ENCODE measurements at regions of chr1 and their contacts with region 1.

Region 1: DNA sequence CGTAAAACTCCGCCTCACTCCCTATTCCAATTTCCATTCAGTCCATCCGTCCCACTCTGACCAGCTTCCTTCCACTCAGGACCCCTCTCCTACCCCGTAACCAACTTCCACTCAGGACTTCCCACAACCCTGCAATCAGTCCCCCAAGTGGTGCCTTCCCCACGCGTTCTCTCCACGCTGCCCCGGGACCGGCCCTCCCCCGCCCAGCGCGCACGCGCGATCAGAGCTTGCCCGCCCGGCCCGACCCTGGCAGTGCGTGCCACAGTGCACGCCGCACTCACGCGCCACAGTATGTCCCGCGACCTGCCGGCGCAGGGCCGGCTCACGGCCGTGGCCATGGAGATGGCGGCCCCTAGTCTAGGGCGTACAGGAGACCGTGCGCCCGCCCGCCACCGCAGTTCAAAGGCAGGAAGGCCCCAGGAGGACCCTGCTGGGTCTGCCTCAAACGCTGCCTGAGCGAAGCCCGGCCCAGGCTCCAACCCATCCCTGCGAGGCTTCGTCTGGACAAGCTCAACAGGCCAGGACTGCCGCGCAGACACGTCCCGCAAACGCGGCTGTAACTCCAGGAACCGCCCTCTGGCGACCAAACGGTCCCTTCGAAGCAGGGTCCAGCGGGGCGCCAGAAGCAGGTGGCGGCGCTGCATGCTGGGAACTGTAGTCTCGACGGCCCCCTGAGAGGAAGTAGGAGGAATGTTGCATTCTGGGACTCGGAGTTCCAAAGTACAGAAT is at the start of gene NDC1:
- DNase-seq: peak; percentile 91
- ATAC-seq: peak; percentile 92
- H3K4me3 ChIP-seq: peak within 1 kb of the TSS; percentile 88
- H3K27ac ChIP-seq: peak within 1 kb of the TSS; percentile 99
- H3K4me1 ChIP-seq: peaks cover 7% of the 10 kb centered on the region; the same call in 1 of the 2 replicates
- H3K27me3 ChIP-seq: no peaks in the 10 kb centered on the region
- CTCF ChIP-seq: peak; percentile 10 to 20 (median 14); a peak in 1 of 6 replicates
- EP300 ChIP-seq: peak; percentile 6 to 38; a peak in 1 of 4 replicates
- POLR2A ChIP-seq: peak; percentile 94
- RAD21 ChIP-seq: no peak
- polyA plus RNA-seq, gene NDC1: 20.2 to 24.9 TPM

Region 2: DNA sequence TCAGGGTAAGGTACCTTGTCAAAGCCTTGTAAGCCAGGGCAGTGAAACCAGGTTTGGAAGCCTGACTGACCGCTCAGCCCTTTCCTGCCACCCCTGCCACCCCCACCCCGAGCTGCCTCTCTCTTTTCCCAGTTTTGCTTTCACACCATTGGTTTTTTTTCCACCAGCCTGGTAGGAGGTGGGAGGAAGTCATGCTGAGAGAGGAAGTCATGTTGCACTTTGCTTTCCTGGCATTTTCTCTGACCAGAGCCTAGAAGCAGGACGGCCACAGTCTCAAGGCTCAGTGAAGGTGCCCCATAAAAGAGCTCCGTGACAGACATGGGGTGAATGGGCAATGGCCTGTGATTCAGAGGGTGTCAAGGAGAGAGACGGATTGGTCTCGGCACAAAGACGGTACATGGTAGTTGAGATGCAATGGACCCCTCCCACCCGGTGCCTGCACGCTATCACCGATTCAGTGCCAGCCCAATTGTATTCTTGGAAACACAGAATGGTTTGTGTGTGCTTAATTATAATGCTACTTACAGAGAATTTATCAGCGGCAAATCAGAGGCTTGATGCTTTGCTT is 421.0 kb before region 1 on chr1:
- CTCF ChIA-PET with region 1: no interaction called
- POLR2A ChIA-PET with region 1: no interaction called
- RAD21 ChIA-PET with region 1: no interaction called
- SMC1A ChIA-PET with region 1: no interaction called
- in situ Hi-C with region 1: no loop called
- intact Hi-C with region 1: no loop called
- DNase-seq: no peak
- ATAC-seq: no peak
- H3K4me3 ChIP-seq: no peak overlapping the region
- H3K27ac ChIP-seq: no peak overlapping the region
- H3K4me1 ChIP-seq: peaks cover 16% of the 10 kb centered on the region
- H3K27me3 ChIP-seq: peaks cover 0 to 6% of the 10 kb centered on the region in 2 experiments; a peak in 2 of 4 replicates
- CTCF ChIP-seq: no peak
- EP300 ChIP-seq: no peak
- POLR2A ChIP-seq: no peak
- RAD21 ChIP-seq: no peak

Region 3: DNA sequence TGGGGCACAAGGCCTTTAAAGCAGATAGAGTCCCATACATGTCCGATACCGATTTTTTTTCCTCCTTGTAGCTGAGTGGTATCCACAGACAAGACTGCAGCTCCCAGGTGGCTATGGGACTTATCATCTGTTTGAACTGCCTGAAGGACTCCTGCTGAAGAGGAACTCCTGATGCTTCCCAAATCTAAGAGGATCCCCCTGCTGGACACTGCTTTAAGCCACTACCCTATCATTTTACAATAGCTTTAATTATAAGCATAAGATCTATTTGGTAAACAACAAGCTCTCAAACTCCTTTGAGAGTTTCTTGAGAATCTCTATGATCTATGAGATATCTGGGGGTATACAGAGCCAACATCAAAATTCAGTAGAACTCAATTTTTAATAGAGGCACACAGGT is 11.7 kb before region 1 on chr1:
- CTCF ChIA-PET with region 1: interaction called, 3 read pairs
- POLR2A ChIA-PET with region 1: interaction called, 11 read pairs
- RAD21 ChIA-PET with region 1: no interaction called
- SMC1A ChIA-PET with region 1: interaction called, 18 read pairs
- in situ Hi-C with region 1: no loop called
- intact Hi-C with region 1: no loop called
- DNase-seq: no peak
- ATAC-seq: no peak
- H3K4me3 ChIP-seq: no peak overlapping the region
- H3K27ac ChIP-seq: no peak overlapping the region
- H3K4me1 ChIP-seq: no peaks in the 10 kb centered on the region
- H3K27me3 ChIP-seq: no peaks in the 10 kb centered on the region
- CTCF ChIP-seq: 0 out of 6 replicates have a peak, but pooled peaks of 1 of the 3 experiments have one; percentile 6
- EP300 ChIP-seq: no peak
- POLR2A ChIP-seq: no peak
- RAD21 ChIP-seq: no peak

Region 4: DNA sequence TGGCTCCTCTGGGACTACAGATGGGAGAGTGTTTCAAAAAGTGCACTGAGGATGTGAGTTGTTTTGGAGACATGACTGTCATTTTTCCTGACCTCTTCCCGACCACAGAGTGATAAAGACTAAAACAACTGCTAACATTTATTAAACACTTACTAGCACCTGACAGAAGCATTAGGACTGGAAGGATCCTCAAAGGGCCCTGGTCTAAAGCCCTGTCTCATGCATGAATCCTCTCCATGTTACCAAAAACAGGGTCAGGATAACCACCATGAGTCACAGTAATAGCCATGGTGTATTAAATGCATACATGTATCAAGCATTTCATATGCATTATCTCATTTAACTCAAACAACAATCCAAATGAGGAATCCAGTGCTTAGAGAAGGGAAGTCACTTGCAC is 350.2 kb after region 1 on chr1:
- CTCF ChIA-PET with region 1: no interaction called
- POLR2A ChIA-PET with region 1: no interaction called
- RAD21 ChIA-PET with region 1: no interaction called
- SMC1A ChIA-PET with region 1: no interaction called
- in situ Hi-C with region 1: no loop called
- intact Hi-C with region 1: no loop called
- DNase-seq: no peak
- ATAC-seq: no peak
- H3K4me3 ChIP-seq: no peak overlapping the region
- H3K27ac ChIP-seq: no peak overlapping the region
- H3K4me1 ChIP-seq: no peaks in the 10 kb centered on the region
- H3K27me3 ChIP-seq: no peaks in the 10 kb centered on the region
- CTCF ChIP-seq: no peak
- EP300 ChIP-seq: no peak
- POLR2A ChIP-seq: no peak
- RAD21 ChIP-seq: no peak

Region 5: GRCh38 chr1:54615531-54616279 is 777.6 kb after region 1 on chr1:
- CTCF ChIA-PET with region 1: no interaction called
- POLR2A ChIA-PET with region 1: interaction called, 10 read pairs
- RAD21 ChIA-PET with region 1: no interaction called
- SMC1A ChIA-PET with region 1: no interaction called
- in situ Hi-C with region 1: no loop called
- intact Hi-C with region 1: no loop called
- DNase-seq: no peak
- ATAC-seq: no peak
- H3K4me3 ChIP-seq: no peak overlapping the region
- H3K27ac ChIP-seq: no peak overlapping the region
- H3K4me1 ChIP-seq: peaks cover 3% of the 10 kb centered on the region; the same call in 1 of the 2 replicates
- H3K27me3 ChIP-seq: no peaks in the 10 kb centered on the region
- CTCF ChIP-seq: no peak
- EP300 ChIP-seq: no peak
- POLR2A ChIP-seq: no peak
- RAD21 ChIP-seq: no peak